MCF 10A (cell line): ENCODE measurements at regions of chr5 and their contacts with region 1.

Region 1: GRCh38 chr5:122415030-122415800 is 103.2 kb downstream of the SNCAIP start:
- DNase-seq: peak; percentile 86
- H3K4me3 Mint-ChIP-seq: no peak overlapping the region
- H3K27ac Mint-ChIP-seq: no peak overlapping the region
- H3K4me1 Mint-ChIP-seq: peaks cover 6% of the 10 kb centered on the region
- H3K27me3 Mint-ChIP-seq: peaks cover 17% of the 10 kb centered on the region
- CTCF ChIP-seq: peak; percentile 87

Region 2: GRCh38 chr5:122311961-122312590 is 103.1 kb before region 1 on chr5 and contains the start of gene SNCAIP:
- CTCF ChIA-PET with region 1: no interaction called
- POLR2A ChIA-PET with region 1: no interaction called
- intact Hi-C with region 1: no loop called
- DNase-seq: peak; percentile 56
- H3K4me3 Mint-ChIP-seq: peak within 1 kb of the TSS; percentile 77
- H3K27ac Mint-ChIP-seq: no peak within 1 kb of the TSS
- H3K4me1 Mint-ChIP-seq: peaks cover 13% of the 10 kb centered on the region
- H3K27me3 Mint-ChIP-seq: peaks cover 15% of the 10 kb centered on the region
- CTCF ChIP-seq: no peak
- total RNA-seq, gene SNCAIP: 0.12 and 0.21 TPM in 2 replicates

Region 3: GRCh38 chr5:122385808-122386207 is 29.4 kb before region 1 on chr5:
- CTCF ChIA-PET with region 1: interaction called, 12 read pairs
- POLR2A ChIA-PET with region 1: no interaction called
- intact Hi-C with region 1: no loop called
- DNase-seq: peak; percentile 39
- H3K4me3 Mint-ChIP-seq: no peak overlapping the region
- H3K27ac Mint-ChIP-seq: no peak overlapping the region
- H3K4me1 Mint-ChIP-seq: no peaks in the 10 kb centered on the region
- H3K27me3 Mint-ChIP-seq: no peaks in the 10 kb centered on the region
- CTCF ChIP-seq: no peak

Region 4: GRCh38 chr5:122400938-122401337 is 14.3 kb before region 1 on chr5:
- CTCF ChIA-PET with region 1: interaction called, 53 read pairs
- POLR2A ChIA-PET with region 1: interaction called, 5 read pairs
- intact Hi-C with region 1: no loop called
- DNase-seq: no peak
- H3K4me3 Mint-ChIP-seq: no peak overlapping the region
- H3K27ac Mint-ChIP-seq: no peak overlapping the region
- H3K4me1 Mint-ChIP-seq: peaks cover 27% of the 10 kb centered on the region
- H3K27me3 Mint-ChIP-seq: no peaks in the 10 kb centered on the region
- CTCF ChIP-seq: no peak

Region 5: DNA sequence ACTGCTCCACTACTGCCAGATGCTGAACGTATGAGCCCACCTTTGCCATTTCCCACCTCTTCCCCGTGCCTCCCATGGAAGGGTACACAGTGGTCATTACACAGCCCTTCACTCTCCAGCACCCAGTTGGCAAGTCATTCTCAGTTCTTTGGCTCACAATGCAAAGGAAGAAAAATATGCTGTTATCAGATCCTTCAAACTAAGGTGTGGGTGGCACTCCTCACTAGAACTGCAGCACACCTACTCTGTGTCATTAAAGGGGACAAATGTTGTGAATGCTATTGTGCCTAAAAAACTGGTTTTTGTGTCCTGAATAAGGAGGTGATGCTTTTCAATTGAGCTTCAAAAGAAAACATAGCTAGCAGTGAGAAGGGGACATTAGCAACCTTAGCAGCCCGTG is 176.6 kb after region 1 on chr5:
- CTCF ChIA-PET with region 1: no interaction called
- POLR2A ChIA-PET with region 1: no interaction called
- intact Hi-C with region 1: no loop called
- DNase-seq: no peak
- H3K4me3 Mint-ChIP-seq: no peak overlapping the region
- H3K27ac Mint-ChIP-seq: no peak overlapping the region
- H3K4me1 Mint-ChIP-seq: no peaks in the 10 kb centered on the region
- H3K27me3 Mint-ChIP-seq: no peaks in the 10 kb centered on the region
- CTCF ChIP-seq: no peak